Left lung (tissue), 14 donors: ENCODE measurements at regions of chr10 and their contacts with region 1.

Region 1: DNA sequence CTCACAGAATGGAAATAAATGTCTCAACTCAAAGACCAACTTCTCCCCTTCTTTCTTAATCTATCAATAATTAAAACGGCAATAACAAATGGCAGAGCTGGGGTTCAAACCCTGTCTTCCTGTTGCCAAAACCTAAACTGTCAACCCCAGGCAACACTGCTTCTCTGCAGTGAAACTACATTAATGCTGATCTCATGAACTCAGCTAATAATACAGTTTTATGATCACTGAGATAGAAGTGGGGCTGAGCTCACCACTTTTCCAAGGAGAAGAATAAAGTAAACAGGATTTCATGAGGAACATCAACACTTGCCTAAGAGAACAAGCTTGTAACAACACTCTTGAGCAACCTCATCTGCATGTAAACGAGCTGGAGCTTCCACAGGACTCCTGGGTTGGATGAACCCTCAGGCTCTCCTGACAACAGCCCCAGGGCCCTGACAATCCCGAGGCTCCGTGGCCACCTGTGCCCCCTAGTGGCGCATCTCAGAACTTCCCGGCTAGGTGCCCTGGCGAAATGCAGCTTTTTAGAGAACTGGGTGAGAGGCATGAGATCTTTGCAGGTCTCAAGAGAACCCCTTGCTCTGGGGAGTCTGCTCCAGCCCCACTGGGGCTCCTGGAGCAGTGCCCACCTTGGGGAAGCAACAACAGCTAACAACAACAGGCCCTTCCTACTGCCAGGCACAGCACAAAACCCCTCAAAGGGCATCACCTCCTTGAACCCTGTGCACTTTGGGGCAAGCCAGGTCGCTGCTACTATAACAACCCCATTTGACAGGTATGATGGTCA is 169.3 kb downstream of the SH3PXD2A start:
- DNase-seq: peak; percentile 66 to 88 (median 75)
- ATAC-seq: peak; percentile 93
- H3K4me3 ChIP-seq: no peak overlapping the region
- H3K27ac ChIP-seq: no peak overlapping the region
- H3K4me1 ChIP-seq: peaks cover 0 to 5% of the 10 kb centered on the region in 2 donors
- H3K27me3 ChIP-seq: peaks cover 0 to under 1% of the 10 kb centered on the region in 2 donors
- CTCF ChIP-seq: peak; percentile 91 to 98

Region 2: GRCh38 chr10:103145860-103146466 is 540.1 kb before region 1 on chr10:
- intact Hi-C with region 1: no loop called
- DNase-seq: peak in 3 of 4 donors; percentile 57 to 86 (median 75)
- ATAC-seq: peak; percentile 54
- H3K4me3 ChIP-seq: no peak overlapping the region
- H3K27ac ChIP-seq: no peak overlapping the region
- H3K4me1 ChIP-seq: peaks cover 8 to 18% of the 10 kb centered on the region in 2 donors
- H3K27me3 ChIP-seq: no peaks in the 10 kb centered on the region
- CTCF ChIP-seq: no peak

Region 3: DNA sequence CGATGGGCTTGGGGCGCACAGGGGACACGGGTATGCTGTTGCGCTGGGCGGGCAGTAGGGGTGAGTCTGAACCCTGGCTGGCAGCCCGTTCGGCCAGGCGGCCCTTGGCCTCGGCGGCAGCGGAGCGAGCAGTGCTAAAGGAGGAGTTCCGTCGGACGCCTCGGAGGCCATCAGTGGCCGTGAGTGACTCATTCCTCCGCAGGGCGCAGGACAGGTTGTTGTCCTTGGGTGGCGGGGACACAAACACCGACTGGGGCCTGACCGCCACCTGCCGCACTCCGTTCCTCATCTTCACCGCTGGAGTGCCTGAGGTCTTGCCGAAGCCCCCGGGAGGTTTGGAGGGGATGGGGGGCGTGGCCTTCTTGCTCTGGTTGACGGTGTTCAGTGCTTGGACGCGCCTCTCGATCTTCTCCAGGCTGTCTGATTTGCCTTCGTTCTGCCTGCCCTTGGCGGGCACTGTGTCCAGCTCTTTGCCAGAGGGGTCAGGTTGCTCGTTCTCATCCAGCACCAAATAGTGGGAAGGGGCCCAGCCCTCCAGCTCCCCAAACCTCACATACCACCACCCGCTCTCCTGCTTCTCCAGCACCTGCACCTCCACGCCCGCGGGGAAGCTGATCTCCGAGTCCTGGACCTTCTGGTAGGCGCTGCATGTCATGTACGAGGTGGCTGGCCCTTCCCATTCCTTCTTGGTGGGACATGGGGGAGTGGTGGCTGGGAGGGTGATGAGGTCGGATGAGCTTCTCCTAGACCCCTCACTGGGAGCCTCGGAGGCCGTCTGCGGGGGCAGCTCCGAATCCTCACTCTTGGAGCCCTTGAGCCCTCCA is 83.8 kb before region 1 on chr10:
- intact Hi-C with region 1: loop called (anchors 2 to 5 kb)
- DNase-seq: peak in 1 of 4 donors; percentile 72
- ATAC-seq: no peak
- H3K4me3 ChIP-seq: no peak overlapping the region
- H3K27ac ChIP-seq: no peak overlapping the region
- H3K4me1 ChIP-seq: no peaks in the 10 kb centered on the region
- H3K27me3 ChIP-seq: no peaks in the 10 kb centered on the region
- CTCF ChIP-seq: no peak

Region 4: DNA sequence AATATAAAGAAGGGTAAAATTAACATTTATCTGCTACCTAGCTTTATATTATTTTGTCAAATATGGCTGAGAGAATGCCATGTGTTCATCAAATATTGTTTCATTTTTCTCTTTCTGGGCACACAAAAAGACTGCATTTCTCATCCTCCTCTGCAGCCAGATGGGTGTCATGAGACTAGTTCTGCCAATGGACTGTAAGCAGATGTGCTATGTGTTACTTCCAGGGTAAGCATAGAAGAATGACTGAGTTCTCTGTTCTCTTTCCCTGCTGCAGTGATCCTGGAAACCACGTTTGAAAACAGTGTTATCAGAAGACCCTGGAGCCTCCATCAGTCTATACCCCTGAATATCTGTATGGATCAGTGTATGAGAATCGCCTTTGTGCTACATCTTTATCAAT is 256.8 kb after region 1 on chr10:
- intact Hi-C with region 1: no loop called
- DNase-seq: no peak
- ATAC-seq: no peak
- H3K4me3 ChIP-seq: no peak overlapping the region
- H3K27ac ChIP-seq: no peak overlapping the region
- H3K4me1 ChIP-seq: no peaks in the 10 kb centered on the region
- H3K27me3 ChIP-seq: no peaks in the 10 kb centered on the region
- CTCF ChIP-seq: no peak